Mammary epithelial cell (primary cell): ENCODE measurements at regions of chr6 and their contacts with region 1.

Region 1: GRCh38 chr6:153553627-153554026 is 422.5 kb upstream of the RGS17 start:
- DNase-seq: peak; percentile 12
- H3K4me3 ChIP-seq: no peak overlapping the region
- H3K27ac ChIP-seq: no peak overlapping the region
- H3K4me1 ChIP-seq: no peaks in the 10 kb centered on the region
- H3K27me3 ChIP-seq: no peaks in the 10 kb centered on the region
- CTCF ChIP-seq: peak; percentile 26 to 70

Region 2: GRCh38 chr6:153523390-153523789 is 30.2 kb before region 1 on chr6:
- CTCF ChIA-PET with region 1: no interaction called
- dilution Hi-C with region 1: loop called (anchors 5 kb)
- in situ Hi-C with region 1: no loop called
- intact Hi-C with region 1: no loop called
- DNase-seq: no peak
- H3K4me3 ChIP-seq: no peak overlapping the region
- H3K27ac ChIP-seq: no peak overlapping the region
- H3K4me1 ChIP-seq: no peaks in the 10 kb centered on the region
- H3K27me3 ChIP-seq: no peaks in the 10 kb centered on the region
- CTCF ChIP-seq: no peak